ENCODE measurements at regions of chr11 and their contacts with region 1.

Region 1: GRCh38 chr11:7143908-7144307 is 55.1 kb downstream of the RBMXL2 start:
- DNase-seq: no peak

Region 2: GRCh38 chr11:7278314-7278917 is 134.5 kb after region 1 on chr11:
- intact Hi-C with region 1: loop called (anchors 1 kb)
- DNase-seq: peak in 1 of 10 donors; percentile 27

Measured in posterior cingulate gyrus (tissue), 11 donors.